ENCODE measurements at regions of chr1 and their contacts with region 1.

Region 1: DNA sequence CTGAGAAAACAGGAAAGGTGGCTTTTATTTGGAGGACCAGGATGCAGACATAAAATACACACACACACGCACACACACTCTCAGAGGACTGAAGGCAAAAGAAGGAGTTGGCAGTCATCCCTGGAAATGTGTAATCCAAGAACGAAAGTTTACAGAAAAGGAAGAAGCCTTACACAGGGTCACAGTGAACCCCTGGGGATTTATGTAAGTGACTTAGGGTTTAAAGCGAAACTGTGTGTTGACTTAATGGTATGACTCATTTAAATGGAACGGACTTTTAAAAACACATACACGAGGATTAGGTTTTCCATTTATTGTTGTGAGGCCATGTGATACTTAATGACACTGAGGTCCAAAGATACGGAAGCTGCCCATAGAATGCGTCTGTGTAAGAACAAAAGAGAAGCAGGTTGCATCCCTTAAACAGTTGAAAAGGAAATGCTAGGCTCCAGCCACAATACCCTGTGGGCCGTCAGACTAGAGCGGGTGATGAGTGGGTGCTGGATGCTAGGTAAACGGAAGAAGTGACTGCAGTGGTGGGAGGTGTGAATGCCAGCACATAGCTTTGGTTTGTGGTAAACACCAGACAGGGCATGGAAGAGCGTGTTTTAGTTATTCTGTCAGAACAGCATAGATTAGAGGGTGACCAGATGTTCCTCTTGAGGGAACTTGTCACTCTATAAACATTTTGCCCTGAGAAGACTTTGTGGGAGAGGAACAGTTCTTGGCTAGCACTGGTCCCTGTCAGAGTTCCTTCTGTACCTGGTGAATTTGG is 21.6 kb upstream of the BCL10 start:
- DNase-seq: peak in 1 of 2 donors; percentile 85
- H3K4me3 ChIP-seq: peak overlapping the region in 1 of 2 donors; percentile 8
- H3K27ac ChIP-seq: peak overlapping the region; percentile 81 to 83
- H3K4me1 ChIP-seq: peaks cover 10 to 26% of the 10 kb centered on the region in 2 donors
- H3K27me3 ChIP-seq: no peaks in the 10 kb centered on the region
- CTCF ChIP-seq: no peak

Region 2: DNA sequence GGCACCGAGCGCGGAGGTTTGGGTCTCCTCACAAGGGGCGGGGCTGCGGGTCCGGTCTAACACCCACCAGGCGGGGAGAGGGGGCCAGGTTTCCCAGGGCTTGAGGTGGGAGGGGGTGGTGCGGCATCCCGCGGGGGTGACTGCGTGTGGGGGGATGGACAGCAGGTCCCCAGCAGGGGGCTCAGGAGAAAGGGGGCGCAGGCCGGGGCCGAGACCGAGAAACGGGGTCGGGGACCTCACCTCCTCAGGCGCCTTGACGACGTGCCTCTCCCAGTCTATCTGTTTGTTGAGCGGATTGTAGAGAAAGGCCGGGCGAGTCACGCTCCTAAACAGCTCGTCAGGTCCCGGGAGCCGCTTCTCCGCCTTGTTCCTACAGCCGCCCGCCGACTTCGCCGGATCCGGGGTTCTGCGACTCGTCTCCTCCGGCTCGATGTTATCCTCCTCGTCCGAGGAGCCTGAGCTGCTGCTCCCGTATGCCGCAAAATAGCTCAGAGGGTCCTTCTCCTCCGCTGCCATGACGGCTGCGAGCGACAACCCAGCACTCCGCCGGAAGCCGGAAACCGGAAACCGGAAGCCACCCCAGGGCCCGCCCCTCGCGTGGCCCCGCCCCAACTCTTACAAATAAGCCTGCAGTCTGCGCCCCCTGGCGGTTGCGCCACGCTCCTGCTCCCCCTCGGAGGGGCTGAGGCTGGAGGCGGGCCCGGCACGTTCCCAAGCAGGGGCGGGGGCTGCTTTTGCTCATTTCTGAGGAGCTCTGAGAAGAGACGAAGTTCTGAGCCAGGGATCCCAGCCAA is 38.7 kb before region 1 on chr1 and contains the start of gene C1orf52:
- intact Hi-C with region 1: no loop called
- DNase-seq: peak; percentile 83 to 98
- H3K4me3 ChIP-seq: peak within 1 kb of the TSS; percentile 70 to 99
- H3K27ac ChIP-seq: peak within 1 kb of the TSS; percentile 86 to 89
- H3K4me1 ChIP-seq: peaks cover 7 to 29% of the 10 kb centered on the region in 2 donors
- H3K27me3 ChIP-seq: no peaks in the 10 kb centered on the region
- CTCF ChIP-seq: peak; percentile 97 to 99 (median 98)
- total RNA-seq, gene C1orf52: 2.3 TPM

Region 3: DNA sequence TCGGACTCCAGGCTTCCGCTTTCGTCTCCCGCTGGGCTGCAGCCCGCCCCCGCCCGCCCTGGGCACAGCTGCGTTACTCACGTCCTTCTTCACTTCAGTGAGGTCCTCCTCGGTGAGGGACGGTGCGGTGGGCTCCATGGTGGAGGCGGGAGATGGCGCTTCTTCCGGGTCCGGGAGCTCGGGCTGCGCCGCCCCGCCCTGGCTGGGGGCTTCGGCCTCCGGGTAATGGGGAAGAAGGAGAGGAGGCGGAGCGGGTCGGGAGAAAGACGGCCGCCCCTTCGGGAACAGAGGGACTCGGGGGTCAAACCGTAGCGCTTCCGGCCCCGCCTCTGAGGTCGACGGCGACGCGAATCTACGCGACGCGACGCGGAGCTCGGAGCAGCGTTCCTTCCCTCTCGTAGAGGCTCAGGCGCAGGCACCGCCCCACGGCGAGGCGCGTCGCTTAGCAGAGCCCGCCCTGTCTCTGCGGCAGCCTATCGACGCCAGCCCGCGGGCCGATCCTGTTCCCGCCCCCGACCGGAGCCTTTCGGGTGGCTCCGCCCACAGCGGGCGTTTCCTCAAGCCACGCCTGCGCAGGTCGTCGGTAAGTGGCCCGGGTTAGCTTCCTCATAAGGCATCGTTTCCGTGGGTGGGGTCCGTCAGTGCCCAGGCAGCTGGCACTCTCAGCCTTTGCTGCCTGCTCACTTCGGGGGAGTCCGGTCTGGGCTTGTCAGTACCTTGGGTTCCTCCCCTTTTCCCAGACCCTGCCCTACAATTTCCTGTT is 21.6 kb before region 1 on chr1 and contains the start of gene BCL10:
- intact Hi-C with region 1: loop called (anchors 1 kb)
- DNase-seq: peak; percentile 95 to 99
- H3K4me3 ChIP-seq: peak within 1 kb of the TSS; percentile 75 to 82
- H3K27ac ChIP-seq: peak within 1 kb of the TSS; percentile 93 to 97
- H3K4me1 ChIP-seq: peaks cover 8 to 17% of the 10 kb centered on the region in 2 donors
- H3K27me3 ChIP-seq: no peaks in the 10 kb centered on the region
- CTCF ChIP-seq: no peak
- total RNA-seq, gene BCL10: 3.7 TPM

Region 4: DNA sequence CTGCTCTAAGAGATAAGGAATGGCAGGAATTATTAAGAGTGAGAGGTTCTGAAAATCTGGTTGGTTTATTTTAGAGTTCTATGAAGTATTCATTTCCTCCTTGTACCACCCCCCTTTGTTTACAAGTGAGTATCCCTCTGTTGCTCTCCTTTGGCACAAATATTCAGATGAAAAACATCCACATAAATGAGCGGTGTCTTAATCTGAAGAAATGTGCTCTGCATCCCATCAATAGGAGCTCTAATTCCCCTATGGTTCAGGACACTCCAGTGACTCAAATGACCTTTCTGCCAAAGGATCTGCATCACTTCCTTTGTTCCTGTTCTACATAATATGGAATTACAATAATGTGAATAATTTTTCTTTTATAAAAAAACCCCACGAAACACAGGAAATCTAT is 150.3 kb after region 1 on chr1:
- intact Hi-C with region 1: no loop called
- DNase-seq: no peak
- H3K4me3 ChIP-seq: no peak overlapping the region
- H3K27ac ChIP-seq: peak overlapping the region in 1 of 2 donors; percentile 31
- H3K4me1 ChIP-seq: peaks cover 0 to 13% of the 10 kb centered on the region in 2 donors
- H3K27me3 ChIP-seq: no peaks in the 10 kb centered on the region
- CTCF ChIP-seq: no peak

Region 5: GRCh38 chr1:85707990-85708828 is 410.2 kb after region 1 on chr1 and contains the start of gene ZNHIT6:
- intact Hi-C with region 1: loop called (anchors 5 kb)
- DNase-seq: peak; percentile 54 to 94
- H3K4me3 ChIP-seq: peak within 1 kb of the TSS; percentile 77 to 87
- H3K27ac ChIP-seq: peak within 1 kb of the TSS; percentile 85 to 86
- H3K4me1 ChIP-seq: peaks cover 0 to 2% of the 10 kb centered on the region in 2 donors
- H3K27me3 ChIP-seq: no peaks in the 10 kb centered on the region
- CTCF ChIP-seq: peak in 2 of 3 experiments; percentile 17 to 32
- total RNA-seq, gene ZNHIT6: 8.2 TPM

Measured in ascending aorta (tissue), 2 donors.